Right cardiac atrium (tissue), 5 donors: ENCODE measurements at regions of chr1 and their contacts with region 1.

Region 1: GRCh38 chr1:79193211-79194079 is 186.9 kb upstream of the ADGRL4 start:
- DNase-seq: peak in 1 of 3 donors; percentile 11
- ATAC-seq: peak in 1 of 2 donors; percentile 64
- H3K4me3 ChIP-seq: no peak overlapping the region
- H3K27ac ChIP-seq: peak overlapping the region; percentile 45
- H3K4me1 ChIP-seq: no peaks in the 10 kb centered on the region
- H3K27me3 ChIP-seq: no peaks in the 10 kb centered on the region

Region 2: GRCh38 chr1:78839704-78840277 is 353.7 kb before region 1 on chr1:
- intact Hi-C with region 1: loop called in 3 of 4 experiments (anchors 2 to 10 kb)
- DNase-seq: no peak
- ATAC-seq: no peak
- H3K4me3 ChIP-seq: no peak overlapping the region
- H3K27ac ChIP-seq: no peak overlapping the region
- H3K4me1 ChIP-seq: no peaks in the 10 kb centered on the region
- H3K27me3 ChIP-seq: no peaks in the 10 kb centered on the region

Region 3: GRCh38 chr1:79059341-79059740 is 134.1 kb before region 1 on chr1:
- intact Hi-C with region 1: no loop called
- DNase-seq: no peak
- ATAC-seq: no peak
- H3K4me3 ChIP-seq: no peak overlapping the region
- H3K27ac ChIP-seq: no peak overlapping the region
- H3K4me1 ChIP-seq: no peaks in the 10 kb centered on the region
- H3K27me3 ChIP-seq: no peaks in the 10 kb centered on the region